HEK293T (cell line): ENCODE measurements at regions of chr1 and their contacts with region 1.

Region 1: GRCh38 chr1:47710329-47711071 is 272.7 kb downstream of the FOXD2 start:
- DNase-seq: peak; percentile 93

Region 2: GRCh38 chr1:47527658-47528255 is 182.7 kb before region 1 on chr1:
- CTCF ChIA-PET with region 1: interaction called, 10 read pairs
- POLR2A ChIA-PET with region 1: no interaction called
- DNase-seq: no peak

Region 3: GRCh38 chr1:47684964-47685762 is 25.3 kb before region 1 on chr1:
- CTCF ChIA-PET with region 1: interaction called, 5 read pairs
- POLR2A ChIA-PET with region 1: interaction called, 15 read pairs
- DNase-seq: no peak

Region 4: GRCh38 chr1:47725992-47726855 is 15.7 kb after region 1 on chr1:
- CTCF ChIA-PET with region 1: interaction called, 21 read pairs
- POLR2A ChIA-PET with region 1: no interaction called
- DNase-seq: peak; percentile 85